ENCODE measurements at regions of chr20 and their contacts with region 1.

Region 1: GRCh38 chr20:40689943-40690835 is 1.2 kb upstream of the MAFB start:
- DNase-seq: peak; percentile 87 to 97 (median 91)

Region 2: DNA sequence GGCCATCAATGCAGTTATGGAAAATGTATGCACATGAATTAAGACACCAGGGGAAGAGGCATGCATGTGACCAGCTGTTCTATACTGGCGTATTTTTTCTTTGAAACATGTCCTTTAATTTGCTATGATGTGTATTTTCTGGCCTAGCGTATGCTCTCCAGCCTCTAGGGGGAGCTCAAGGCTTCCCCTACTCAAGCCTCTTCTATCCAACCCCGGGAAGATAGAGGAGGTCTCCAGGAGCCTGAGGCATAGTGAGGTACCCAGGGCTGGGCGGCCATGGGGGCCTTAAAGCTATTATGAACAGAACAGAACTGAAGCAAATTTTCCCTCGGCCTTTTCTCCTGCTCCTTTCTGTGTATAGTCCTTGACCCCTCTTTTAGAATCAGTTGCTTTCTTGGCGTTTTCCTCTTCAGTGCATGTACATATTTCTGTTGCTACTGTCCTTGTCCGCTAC is 530.1 kb before region 1 on chr20:
- intact Hi-C with region 1: loop called (anchors 10 kb)
- DNase-seq: peak in 36 of 42 donors; percentile 3 to 77 (median 36)

Region 3: DNA sequence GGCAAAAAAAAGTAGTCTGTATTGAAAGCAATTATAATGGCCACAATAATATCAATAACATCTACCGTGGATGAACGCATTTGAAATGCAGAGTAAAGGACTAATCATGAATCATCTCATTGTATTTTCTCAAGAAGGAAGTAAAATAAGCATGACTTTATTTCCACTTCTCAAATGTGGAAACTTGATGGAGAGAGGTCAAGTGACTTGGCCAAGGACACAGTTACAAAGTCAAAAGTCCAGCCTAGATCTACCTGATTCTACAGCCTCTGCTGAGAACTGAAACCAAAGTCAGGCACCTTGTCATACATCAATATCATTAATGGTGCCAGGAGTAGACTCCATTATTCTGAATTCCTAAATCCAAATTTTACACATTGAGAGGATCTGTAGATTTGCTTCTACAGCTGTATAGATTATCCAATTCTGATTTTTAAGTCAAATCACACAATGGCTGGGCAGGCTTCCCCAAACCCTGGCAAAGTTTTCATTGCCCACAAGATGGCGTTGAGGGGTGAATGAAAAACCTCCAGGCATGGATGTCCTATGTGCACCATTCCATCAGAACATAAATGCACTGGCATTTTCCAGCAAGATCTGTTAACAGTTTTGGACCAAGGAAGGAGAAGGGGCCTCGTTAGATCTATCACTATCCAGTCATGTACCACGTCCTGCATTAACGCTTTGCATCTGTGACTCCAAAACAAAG is 424.2 kb before region 1 on chr20:
- intact Hi-C with region 1: loop called (anchors 5 kb)
- DNase-seq: peak in 24 of 42 donors; percentile 17 to 75 (median 38)

Region 4: DNA sequence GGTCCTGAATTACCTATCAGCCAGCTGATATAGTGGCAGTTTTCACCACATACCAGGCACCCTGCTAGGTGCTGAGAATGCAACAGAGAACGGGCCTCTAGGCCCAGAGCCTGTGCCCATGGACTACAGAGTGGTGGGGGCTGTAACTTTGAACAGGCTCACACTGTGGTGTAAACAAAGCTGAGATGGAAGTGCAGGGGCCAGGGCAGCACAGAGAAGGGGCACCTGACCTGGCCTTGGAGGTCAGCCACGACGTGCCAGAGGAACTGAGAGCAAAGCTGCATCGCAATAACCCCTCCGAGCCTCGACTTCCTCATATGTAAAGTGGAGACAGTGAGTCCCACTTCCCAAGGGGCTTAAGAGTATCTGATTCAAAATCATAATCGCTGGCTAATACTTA is 107.0 kb before region 1 on chr20:
- intact Hi-C with region 1: loop called (anchors 10 kb)
- DNase-seq: peak in 35 of 42 donors; percentile 11 to 60 (median 38)

Region 5: GRCh38 chr20:40728996-40729395 is 38.8 kb after region 1 on chr20:
- intact Hi-C with region 1: no loop called
- DNase-seq: peak in 2 of 42 donors; percentile 3 to 17

Region 6: GRCh38 chr20:40754339-40754943 is 64.3 kb after region 1 on chr20:
- intact Hi-C with region 1: no loop called
- DNase-seq: no peak

Measured in head of caudate nucleus (tissue), 42 donors.